ENCODE measurements at regions of chr3 and their contacts with region 1.

Region 1: DNA sequence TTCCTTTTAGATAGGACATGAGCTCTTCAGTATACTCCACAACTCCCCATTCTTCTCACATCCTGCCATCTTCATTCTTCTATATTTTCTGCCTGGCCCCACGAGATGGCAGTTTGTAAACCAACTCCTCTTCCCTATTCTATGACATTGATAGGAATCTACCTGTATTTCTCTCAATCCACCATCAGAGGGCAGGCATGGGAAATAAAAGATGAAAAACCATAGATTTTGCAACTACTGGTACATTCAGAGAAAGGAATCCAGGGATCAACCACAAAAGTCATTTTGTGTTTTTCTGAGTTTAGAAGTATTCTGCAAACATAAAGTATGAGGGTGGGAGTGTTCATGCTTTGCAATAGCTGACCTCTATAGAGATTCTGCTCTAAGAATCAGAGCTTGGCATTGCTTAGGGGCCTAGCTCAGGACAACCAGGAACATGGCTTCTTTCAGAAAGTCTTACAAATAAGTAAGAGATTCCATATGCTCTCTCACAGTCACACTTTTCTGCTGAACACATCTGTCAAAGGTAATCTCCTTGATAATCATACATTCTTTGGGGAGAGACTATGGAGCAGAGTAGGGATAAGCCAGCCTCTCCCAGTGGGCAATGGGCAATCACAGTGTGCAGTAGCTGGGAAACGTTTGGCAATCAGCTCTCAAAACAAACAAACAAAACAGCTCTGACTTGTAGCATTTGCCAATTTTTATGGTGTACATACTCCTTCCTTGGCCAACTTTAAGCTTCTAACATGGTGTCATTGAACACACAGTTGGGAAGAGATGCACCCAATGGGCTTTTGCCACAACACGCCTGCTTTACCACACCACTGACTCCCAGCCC is 43.1 kb upstream of the SLC25A36 start:
- DNase-seq: peak; percentile 6
- ATAC-seq: peak; percentile 74
- H3K4me3 Mint-ChIP-seq: no peak overlapping the region
- H3K27ac Mint-ChIP-seq: no peak overlapping the region
- H3K4me1 Mint-ChIP-seq: no peaks in the 10 kb centered on the region
- H3K27me3 Mint-ChIP-seq: peaks cover 10% of the 10 kb centered on the region
- CTCF ChIP-seq: peak; percentile 70

Region 2: DNA sequence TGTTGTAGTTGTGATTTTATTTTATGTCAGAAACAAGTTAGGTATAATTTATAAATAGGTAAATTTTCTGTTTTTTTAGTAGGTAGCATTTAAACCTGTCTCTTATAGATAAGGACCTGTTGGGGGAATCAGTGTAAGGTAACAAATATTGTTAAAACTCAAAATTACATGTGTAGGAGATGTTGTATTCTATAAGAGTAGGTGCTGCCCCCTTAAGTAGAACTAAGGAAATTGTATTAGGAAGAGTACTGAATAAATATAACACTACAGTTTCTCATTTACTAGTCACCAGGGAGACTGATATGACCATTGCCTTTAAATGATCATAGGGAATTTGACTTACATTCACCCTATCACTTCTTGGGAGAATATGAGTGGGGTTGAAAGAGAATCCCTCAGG is 74.3 kb after region 1 on chr3:
- CTCF ChIA-PET with region 1: interaction called, 6 read pairs
- POLR2A ChIA-PET with region 1: no interaction called
- intact Hi-C with region 1: loop called (anchors 5 kb)
- DNase-seq: no peak
- ATAC-seq: no peak
- H3K4me3 Mint-ChIP-seq: no peak overlapping the region
- H3K27ac Mint-ChIP-seq: no peak overlapping the region
- H3K4me1 Mint-ChIP-seq: peaks cover 4% of the 10 kb centered on the region
- H3K27me3 Mint-ChIP-seq: no peaks in the 10 kb centered on the region
- CTCF ChIP-seq: peak; percentile 50

Region 3: GRCh38 chr3:141105828-141106628 is 207.5 kb after region 1 on chr3:
- CTCF ChIA-PET with region 1: interaction called, 7 read pairs
- POLR2A ChIA-PET with region 1: no interaction called
- intact Hi-C with region 1: loop called (anchors 5 kb)
- DNase-seq: peak; percentile 87
- ATAC-seq: peak; percentile 85
- H3K4me3 Mint-ChIP-seq: no peak overlapping the region
- H3K27ac Mint-ChIP-seq: no peak overlapping the region
- H3K4me1 Mint-ChIP-seq: no peaks in the 10 kb centered on the region
- H3K27me3 Mint-ChIP-seq: no peaks in the 10 kb centered on the region
- CTCF ChIP-seq: peak; percentile 74